ENCODE measurements at regions of chr21 and their contacts with region 1.

Region 1: DNA sequence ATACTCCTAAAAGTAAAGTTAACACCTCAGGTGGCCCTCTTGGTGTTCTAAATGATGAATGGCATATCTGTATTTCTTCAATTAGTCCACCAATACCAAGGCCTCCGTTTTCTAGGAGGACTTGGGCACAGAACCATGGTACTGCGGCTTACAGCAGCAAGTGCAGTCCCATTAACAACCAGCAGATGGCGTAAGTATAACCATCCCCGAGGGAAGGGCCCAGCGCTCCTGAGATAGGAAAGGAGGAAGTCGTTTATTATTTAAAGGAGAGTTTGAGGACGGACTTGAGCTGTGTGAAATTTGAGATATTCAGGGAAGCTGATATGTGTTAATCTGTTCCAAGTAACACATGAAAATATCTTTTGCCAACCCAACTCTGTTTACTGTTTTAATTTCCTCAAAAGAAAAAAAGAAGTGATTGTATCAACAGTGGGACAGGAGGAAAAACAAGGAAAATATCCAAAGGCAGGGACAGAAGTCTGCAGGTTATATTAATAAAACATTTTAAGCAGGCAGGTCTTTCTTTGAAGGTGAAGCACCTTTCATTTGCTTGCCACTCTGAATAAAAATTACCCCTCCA is 37.7 kb upstream of the KCNJ15 start:
- DNase-seq: peak; percentile 5
- H3K4me3 ChIP-seq: no peak overlapping the region
- CTCF ChIP-seq: peak; percentile 90

Region 2: GRCh38 chr21:38012701-38013100 is 206.4 kb before region 1 on chr21:
- CTCF ChIA-PET with region 1: no interaction called
- POLR2A ChIA-PET with region 1: no interaction called
- DNase-seq: no peak
- H3K4me3 ChIP-seq: no peak overlapping the region
- CTCF ChIP-seq: no peak

Region 3: DNA sequence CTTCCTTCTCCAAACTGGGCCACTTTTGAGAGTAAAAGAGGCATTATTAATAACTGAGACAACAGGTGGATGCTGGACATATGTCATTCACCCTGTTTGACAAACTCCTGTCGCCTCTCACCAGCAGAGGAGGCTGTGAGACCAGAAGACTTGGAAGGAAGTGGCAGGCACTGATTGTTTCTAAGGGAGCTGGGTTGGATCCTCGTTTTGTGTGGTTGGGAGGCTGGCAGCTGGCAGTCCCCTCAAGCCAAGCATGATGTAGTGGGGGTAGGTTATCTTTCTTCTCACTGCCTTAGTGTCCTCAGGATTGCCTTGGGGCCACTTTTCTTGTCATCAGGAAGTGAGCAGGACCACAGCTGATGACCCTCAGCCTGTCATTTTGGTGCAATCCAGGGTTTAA is 48.9 kb before region 1 on chr21:
- CTCF ChIA-PET with region 1: interaction called, 22 read pairs
- POLR2A ChIA-PET with region 1: no interaction called
- DNase-seq: no peak
- H3K4me3 ChIP-seq: no peak overlapping the region
- CTCF ChIP-seq: peak; percentile 49

Region 4: DNA sequence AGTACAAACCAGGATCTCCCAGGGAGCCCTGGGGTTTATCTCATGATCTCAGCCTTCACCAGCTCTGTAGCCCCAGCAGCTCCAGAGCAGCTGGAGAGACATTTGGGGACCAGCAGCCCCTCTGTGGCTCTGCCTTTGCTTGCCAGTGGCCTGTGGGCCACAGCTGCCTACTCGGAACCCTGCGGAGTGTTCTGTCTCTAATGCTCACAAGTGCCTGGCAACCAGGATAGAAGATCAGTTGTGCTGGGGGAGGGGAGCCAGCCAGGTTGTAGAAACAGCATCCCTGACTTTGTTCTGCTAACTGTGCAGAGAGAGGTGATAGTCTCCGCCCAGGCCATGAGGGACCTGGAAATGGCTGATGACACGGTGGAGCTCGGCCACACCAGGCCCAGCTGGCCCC is 13.2 kb before region 1 on chr21:
- CTCF ChIA-PET with region 1: interaction called, 94 read pairs
- POLR2A ChIA-PET with region 1: no interaction called
- DNase-seq: no peak
- H3K4me3 ChIP-seq: no peak overlapping the region
- CTCF ChIP-seq: no peak

Region 5: GRCh38 chr21:38323721-38324531 is 104.8 kb after region 1 on chr21:
- CTCF ChIA-PET with region 1: interaction called, 12 read pairs
- POLR2A ChIA-PET with region 1: no interaction called
- DNase-seq: peak; percentile 92
- H3K4me3 ChIP-seq: no peak overlapping the region
- CTCF ChIP-seq: no peak

Region 6: GRCh38 chr21:38343693-38344092 is 124.6 kb after region 1 on chr21:
- CTCF ChIA-PET with region 1: interaction called, 388 read pairs
- POLR2A ChIA-PET with region 1: no interaction called
- DNase-seq: no peak
- H3K4me3 ChIP-seq: no peak overlapping the region
- CTCF ChIP-seq: no peak

Measured in AG04449 (cell line).